Head of caudate nucleus (tissue), 42 donors: ENCODE measurements at regions of chr19 and their contacts with region 1.

Region 1: DNA sequence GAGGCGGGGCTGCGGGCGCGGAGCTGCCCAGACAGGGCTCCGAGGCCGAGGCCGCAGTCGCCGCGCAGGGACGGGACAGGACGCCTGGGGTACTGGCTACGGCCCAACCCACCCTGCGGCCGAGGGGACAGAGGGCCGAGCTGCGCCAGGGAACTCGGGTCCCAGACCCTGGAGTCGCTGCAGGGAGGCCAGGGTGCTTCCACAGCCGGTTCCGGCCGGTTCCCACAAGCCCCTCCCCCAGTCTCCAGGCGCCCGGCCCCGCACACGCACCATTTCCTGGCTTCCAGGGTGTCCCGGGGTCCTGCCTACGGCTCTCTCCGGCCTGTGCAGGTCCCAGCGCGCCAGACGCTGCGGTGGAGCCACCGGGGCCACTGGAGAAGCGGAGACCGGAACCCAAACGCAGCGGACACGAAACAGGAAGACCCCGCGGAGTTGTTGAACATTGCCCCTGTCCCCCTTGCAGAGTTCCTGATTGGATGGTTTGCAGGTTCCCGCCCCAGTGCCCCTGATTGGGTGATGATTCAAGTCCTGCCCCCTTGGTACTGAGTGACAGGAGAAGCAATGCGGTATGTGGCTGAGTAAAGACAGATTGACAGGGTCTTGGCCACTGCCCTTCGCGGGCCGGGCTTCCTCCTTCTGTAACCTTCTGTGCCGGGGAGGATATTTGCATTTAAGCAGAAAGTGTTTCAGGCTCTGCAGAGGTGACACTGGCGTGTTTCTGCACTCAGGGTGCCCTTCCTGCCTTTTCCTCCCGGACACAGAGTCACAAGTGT is at the start of gene ZNF564:
- DNase-seq: peak; percentile 90 to 100 (median 98)

Region 2: DNA sequence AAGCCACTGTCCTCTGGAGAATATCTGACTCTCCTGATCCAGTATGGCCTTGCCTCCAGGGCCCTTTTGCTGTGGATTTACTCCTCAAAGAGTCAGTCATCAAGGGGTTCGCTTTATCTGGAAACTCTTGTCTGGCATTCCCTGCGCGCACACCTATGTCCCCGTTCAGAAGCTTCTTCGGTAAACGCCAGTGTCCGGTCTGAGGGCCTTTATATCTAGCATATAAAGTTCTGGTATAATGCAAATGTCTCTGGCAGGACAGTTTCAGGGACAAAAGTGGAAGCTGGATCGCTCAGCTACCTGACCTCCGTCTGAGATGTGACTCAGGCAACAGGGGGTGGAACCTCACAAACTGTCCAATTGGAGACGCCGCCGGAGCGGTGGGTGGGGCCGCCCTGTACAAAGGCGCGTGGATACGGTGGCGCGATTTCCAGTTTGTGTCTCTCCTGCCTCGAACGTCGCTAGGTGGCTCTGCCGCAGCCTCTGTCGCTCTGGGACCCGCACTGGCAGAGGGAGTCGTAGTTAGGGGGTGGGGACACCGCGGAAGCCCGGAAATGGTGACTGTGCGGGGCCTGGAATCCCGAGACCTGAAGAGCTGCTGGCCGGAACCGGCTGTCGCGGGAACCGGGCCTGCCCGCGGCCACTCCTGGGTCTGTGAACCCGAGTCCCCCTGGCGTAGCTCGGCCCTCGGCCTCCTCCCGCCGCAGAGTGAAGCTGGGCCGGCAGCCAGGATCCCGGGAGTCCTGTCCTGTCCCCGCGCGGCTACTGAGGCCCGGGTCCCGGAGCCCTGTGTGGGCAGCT is 56.0 kb before region 1 on chr19:
- intact Hi-C with region 1: loop called (anchors 5 kb)
- DNase-seq: peak; percentile 94 to 99 (median 97)

Region 3: DNA sequence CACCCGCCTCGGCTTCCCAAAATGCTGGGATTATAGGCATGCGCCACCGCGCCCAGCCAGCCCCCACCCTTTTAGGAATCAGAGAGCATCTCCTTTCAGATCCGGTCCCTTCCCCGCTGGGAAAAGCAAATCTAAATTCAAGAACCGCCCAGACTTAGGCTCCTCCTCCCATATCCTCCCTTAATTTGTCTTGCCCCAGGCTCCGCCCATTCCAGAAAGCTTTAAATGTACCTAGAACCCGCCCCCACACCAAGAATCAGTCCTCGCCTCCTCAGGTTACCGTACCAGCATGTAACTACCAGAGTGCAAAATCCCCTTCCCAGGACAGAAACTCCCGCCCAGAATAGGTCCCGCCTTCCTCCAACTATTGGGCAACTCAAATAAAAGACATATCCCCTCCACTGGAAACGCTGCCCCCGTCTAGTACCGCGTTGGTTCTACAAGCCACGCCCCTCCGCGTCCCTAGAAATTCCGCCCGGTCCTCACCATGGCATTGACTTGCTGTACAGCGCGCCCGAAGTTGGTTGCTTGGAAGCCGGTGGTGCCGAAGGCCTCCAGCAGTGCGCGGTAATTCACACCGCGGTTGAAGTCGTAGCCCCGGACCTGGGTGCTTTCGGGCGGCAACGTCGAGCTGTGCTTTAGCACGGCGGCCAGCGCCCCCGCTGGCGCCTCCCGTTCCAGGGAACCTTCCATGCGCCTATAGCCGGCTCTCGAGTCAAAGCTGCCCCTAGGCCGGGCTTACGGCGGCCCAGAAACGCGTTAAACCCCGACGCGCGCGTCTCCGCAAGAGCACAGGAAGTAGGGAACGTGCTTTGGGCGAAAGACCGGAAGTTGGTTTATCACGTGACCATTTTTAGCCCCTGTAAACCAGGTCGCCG is 130.1 kb after region 1 on chr19 and contains the start of gene DHPS:
- intact Hi-C with region 1: loop called (anchors 5 kb)
- DNase-seq: peak; percentile 81 to 98 (median 93)

Region 4: GRCh38 chr19:12703046-12703445 is 151.8 kb after region 1 on chr19:
- intact Hi-C with region 1: no loop called
- DNase-seq: no peak